B cell (primary cell): ENCODE measurements at regions of chr14 and their contacts with region 1.

Region 1: GRCh38 chr14:23539248-23540140 is 12.1 kb downstream of the ZFHX2 start:
- DNase-seq: peak; percentile 55
- ATAC-seq: peak; percentile 74
- H3K4me3 ChIP-seq: no peak overlapping the region
- H3K4me3 Mint-ChIP-seq: no peak overlapping the region
- H3K27ac ChIP-seq: no peak overlapping the region
- H3K27ac Mint-ChIP-seq: no peak overlapping the region
- H3K4me1 ChIP-seq: no peaks in the 10 kb centered on the region
- H3K4me1 Mint-ChIP-seq: no peaks in the 10 kb centered on the region
- H3K27me3 ChIP-seq: peaks cover 0 to 5% (median 0%) of the 10 kb centered on the region in 4 experiments
- H3K27me3 Mint-ChIP-seq: peaks cover 3% of the 10 kb centered on the region
- CTCF ChIP-seq: peak; percentile 78

Region 2: DNA sequence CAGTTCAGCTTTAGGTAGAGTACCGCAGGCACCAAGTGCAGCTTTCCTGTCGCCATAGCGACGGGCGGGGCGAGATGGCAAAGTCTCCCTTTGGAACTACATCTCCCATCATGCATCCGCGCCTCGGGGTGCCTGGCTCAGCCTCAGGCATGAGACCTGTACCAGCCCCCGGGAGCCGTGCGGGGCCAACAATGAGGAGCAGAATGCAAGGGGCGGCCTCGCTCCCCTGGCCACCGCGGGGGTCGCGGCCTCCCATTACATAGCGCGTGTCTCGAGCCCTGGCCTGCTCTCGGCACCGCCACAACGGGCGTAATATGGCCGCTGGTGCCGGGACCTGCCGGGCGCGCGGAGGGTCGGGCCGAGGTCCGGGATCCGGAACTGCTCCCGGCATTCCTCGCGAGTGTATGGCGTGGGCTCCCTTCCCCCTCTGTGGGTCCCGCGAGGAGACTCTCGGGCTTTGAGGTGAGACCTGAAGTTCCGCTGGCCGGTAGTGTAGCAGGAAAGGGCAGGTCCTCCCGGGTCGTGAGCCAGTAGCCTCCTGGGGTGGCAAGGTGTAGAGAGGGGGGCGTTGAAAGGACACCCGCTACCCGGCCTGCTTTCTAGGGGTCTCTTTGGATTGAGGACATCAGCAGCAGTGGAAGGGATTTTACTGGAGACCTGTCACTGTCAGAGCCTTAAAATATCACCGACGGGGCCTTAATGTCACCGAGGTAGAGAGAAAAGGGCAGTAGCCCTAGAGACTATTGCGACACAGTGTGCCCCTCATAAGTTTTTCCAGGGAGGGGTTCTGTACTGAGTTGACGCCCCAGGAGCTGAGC is 16.6 kb after region 1 on chr14 and contains the start of gene THTPA:
- CTCF ChIA-PET with region 1: interaction called, 80 read pairs
- POLR2A ChIA-PET with region 1: no interaction called
- intact Hi-C with region 1: loop called (anchors 1 kb)
- DNase-seq: peak; percentile 96
- ATAC-seq: peak; percentile 78
- H3K4me3 ChIP-seq: peak within 1 kb of the TSS; percentile 17 to 97 (median 81)
- H3K4me3 Mint-ChIP-seq: peak within 1 kb of the TSS; percentile 98
- H3K27ac ChIP-seq: peak within 1 kb of the TSS; percentile 69 to 84
- H3K27ac Mint-ChIP-seq: peak within 1 kb of the TSS; percentile 99
- H3K4me1 ChIP-seq: peaks cover 19 to 36% of the 10 kb centered on the region in 2 donors
- H3K4me1 Mint-ChIP-seq: peaks cover 45% of the 10 kb centered on the region
- H3K27me3 ChIP-seq: no peaks in the 10 kb centered on the region
- H3K27me3 Mint-ChIP-seq: no peaks in the 10 kb centered on the region
- CTCF ChIP-seq: no peak
- total RNA-seq, gene THTPA: 21.4 and 21.5 TPM in 2 replicates

Region 3: GRCh38 chr14:24132061-24132685 is 592.7 kb after region 1 on chr14:
- CTCF ChIA-PET with region 1: no interaction called
- POLR2A ChIA-PET with region 1: no interaction called
- intact Hi-C with region 1: no loop called
- DNase-seq: peak; percentile 18
- ATAC-seq: no peak
- H3K4me3 ChIP-seq: no peak overlapping the region
- H3K4me3 Mint-ChIP-seq: no peak overlapping the region
- H3K27ac ChIP-seq: no peak overlapping the region
- H3K27ac Mint-ChIP-seq: peak overlapping the region; percentile 32
- H3K4me1 ChIP-seq: peaks cover 33 to 34% of the 10 kb centered on the region in 2 donors
- H3K4me1 Mint-ChIP-seq: peaks cover 34% of the 10 kb centered on the region
- H3K27me3 ChIP-seq: no peaks in the 10 kb centered on the region
- H3K27me3 Mint-ChIP-seq: no peaks in the 10 kb centered on the region
- CTCF ChIP-seq: no peak